Aorta (tissue), 5 donors: ENCODE measurements at regions of chr12 and their contacts with region 1.

Region 1: GRCh38 chr12:30754709-30755394 is at the start of gene CAPRIN2:
- DNase-seq: peak; percentile 98 to 99
- ATAC-seq: peak; percentile 99
- H3K4me3 ChIP-seq: peak within 1 kb of the TSS; percentile 63 to 81
- H3K27ac ChIP-seq: peak within 1 kb of the TSS; percentile 19 to 65
- H3K4me1 ChIP-seq: peaks cover 4 to 5% of the 10 kb centered on the region in 2 donors
- H3K27me3 ChIP-seq: no peaks in the 10 kb centered on the region
- total RNA-seq, gene CAPRIN2: 26.5 to 41.2 TPM

Region 2: DNA sequence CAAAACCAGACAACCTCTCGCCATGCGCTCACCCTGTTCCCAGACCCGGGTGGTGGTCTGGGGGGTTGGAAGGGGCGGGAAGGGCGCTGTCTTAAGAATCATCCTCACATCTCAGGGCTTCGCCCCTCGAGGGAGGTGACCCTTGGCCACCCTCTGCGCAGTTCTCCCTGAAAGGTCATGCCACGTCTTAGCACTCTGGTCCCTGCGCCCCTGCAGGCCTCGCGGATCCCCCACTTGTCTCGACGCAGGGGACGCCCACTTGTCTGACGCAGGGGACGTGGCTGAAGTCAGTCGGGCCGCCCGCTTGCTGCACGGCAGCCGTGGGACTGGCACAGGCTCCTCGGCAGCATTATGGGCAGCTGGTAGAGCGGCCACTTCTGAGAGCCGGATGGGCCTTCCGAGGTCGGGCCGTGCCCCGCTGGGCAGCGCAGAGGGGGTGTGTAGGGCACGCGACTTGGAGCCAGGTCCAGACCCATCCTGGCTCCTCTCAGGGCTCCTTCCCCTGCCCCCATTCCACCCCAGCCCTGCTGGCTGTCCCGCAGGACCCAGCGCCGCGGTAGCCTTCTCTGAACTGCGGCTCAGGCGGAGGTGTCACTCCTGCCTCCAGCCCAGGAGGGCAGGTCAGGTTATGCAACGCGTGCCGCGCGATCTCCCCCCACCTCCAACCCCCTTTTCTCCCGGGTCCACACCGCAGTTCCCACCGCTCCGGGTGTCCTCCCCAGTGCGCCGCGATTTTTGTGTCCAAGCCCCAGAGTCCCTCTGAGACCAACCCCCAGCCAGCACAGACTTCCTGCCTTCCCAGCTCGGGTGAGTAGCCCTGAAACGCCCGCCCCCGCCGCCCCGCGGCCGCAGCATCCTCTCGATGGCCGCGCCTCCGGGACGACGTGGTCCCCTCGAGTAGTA is 40.8 kb after region 1 on chr12:
- intact Hi-C with region 1: loop called (anchors 2 to 5 kb)
- DNase-seq: peak; percentile 86 to 92
- ATAC-seq: peak; percentile 84
- H3K4me3 ChIP-seq: peak overlapping the region; percentile 54 to 58
- H3K27ac ChIP-seq: peak overlapping the region in 1 of 2 donors; percentile 38
- H3K4me1 ChIP-seq: no peaks in the 10 kb centered on the region
- H3K27me3 ChIP-seq: no peaks in the 10 kb centered on the region